BJ (cell line): ENCODE measurements at regions of chr2 and their contacts with region 1.

Region 1: DNA sequence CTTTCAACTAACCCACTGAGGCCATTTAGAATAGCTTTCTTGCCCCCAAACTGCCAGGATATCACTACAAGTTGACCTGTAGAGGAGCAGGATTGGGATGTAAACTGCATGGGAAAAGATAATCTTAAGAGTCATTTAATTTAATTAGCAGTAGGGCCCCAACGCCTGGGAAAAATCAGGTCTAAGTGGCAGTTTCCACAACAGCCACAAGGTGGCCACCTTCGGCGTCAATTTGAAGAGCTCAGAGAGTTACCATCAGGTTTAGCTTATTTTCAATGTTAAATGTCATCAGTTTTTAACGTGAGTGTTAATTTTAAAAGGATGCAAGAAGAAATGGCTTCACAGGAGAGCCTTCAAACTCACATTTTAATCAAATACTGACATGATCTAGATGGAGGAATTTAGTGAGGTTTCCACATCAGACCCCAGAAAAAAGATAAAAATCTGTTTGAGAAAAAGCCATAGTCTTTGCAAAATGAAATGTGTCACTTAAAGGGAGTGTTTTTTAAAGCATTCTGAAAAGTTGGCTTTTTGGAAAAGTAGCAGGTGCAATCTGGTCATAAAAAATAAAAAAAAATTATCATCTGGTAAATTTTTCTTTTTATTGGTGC is 77.3 kb upstream of the UPP2 start:
- DNase-seq: no peak
- H3K4me3 ChIP-seq: no peak overlapping the region
- H3K27me3 ChIP-seq: peaks cover 2% of the 10 kb centered on the region
- CTCF ChIP-seq: peak; percentile 80

Region 2: DNA sequence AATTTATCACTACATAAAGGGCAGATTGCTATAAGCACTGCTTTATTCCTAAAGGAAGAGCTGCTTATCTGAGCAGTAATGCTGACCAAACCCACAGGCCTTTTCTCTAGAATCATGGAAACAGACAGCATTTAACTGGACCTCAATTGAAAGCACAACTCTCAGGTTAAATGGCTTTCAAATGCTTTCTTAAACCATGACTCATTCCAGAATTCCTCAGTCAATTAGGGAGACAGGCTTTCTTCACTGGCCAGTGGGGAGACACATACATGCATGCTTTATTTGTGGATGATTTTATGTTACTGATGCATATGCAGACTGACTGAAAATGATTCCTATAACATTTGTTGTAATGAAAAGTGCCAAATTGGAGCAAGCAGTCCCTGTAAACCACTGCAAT is 262.9 kb before region 1 on chr2:
- CTCF ChIA-PET with region 1: no interaction called
- POLR2A ChIA-PET with region 1: no interaction called
- DNase-seq: no peak
- H3K4me3 ChIP-seq: no peak overlapping the region
- H3K27me3 ChIP-seq: no peaks in the 10 kb centered on the region
- CTCF ChIP-seq: no peak

Region 3: DNA sequence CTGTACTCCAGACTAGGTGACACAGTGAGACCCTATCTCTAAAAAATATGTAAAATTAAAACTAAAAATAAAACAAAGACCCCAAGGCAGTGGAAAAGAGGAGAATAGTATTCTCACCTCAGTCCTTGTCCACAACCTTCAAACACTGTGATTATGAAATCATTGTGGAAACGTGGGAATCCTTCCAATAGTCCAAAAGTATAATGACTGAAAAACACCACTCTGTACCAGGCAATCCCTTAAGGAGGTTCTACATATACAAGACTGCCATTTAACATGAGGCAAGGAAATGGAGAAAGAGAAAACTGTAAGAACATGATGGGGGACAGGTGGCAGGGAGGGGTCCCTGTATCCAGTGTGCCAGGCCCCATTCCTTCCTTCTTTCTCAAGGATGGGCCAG is 214.4 kb before region 1 on chr2:
- CTCF ChIA-PET with region 1: no interaction called
- POLR2A ChIA-PET with region 1: no interaction called
- DNase-seq: no peak
- H3K4me3 ChIP-seq: no peak overlapping the region
- H3K27me3 ChIP-seq: no peaks in the 10 kb centered on the region
- CTCF ChIP-seq: no peak

Region 4: GRCh38 chr2:158013891-158014290 is 10.5 kb before region 1 on chr2:
- CTCF ChIA-PET with region 1: interaction called, 21 read pairs
- POLR2A ChIA-PET with region 1: no interaction called
- DNase-seq: no peak
- H3K4me3 ChIP-seq: no peak overlapping the region
- H3K27me3 ChIP-seq: no peaks in the 10 kb centered on the region
- CTCF ChIP-seq: no peak

Region 5: GRCh38 chr2:158403237-158403636 is 378.8 kb after region 1 on chr2:
- CTCF ChIA-PET with region 1: no interaction called
- POLR2A ChIA-PET with region 1: no interaction called
- DNase-seq: no peak
- H3K4me3 ChIP-seq: no peak overlapping the region
- H3K27me3 ChIP-seq: no peaks in the 10 kb centered on the region
- CTCF ChIP-seq: no peak